PC-9 (cell line): ENCODE measurements at regions of chr7 and their contacts with region 1.

Region 1: GRCh38 chr7:51350200-51350921 is 33.8 kb upstream of the COBL start:
- DNase-seq: peak; percentile 82 to 100
- H3K4me3 ChIP-seq: peak overlapping the region; percentile 7; the same call in 1 of the 2 replicates
- H3K27ac ChIP-seq: peak overlapping the region; percentile 65
- H3K4me1 ChIP-seq: peaks cover 23% of the 10 kb centered on the region
- H3K27me3 ChIP-seq: no peaks in the 10 kb centered on the region
- CTCF ChIP-seq: no peak

Region 2: GRCh38 chr7:51315393-51316261 is 34.7 kb before region 1 on chr7:
- CTCF ChIA-PET with region 1: no interaction called
- POLR2A ChIA-PET with region 1: interaction called, 3 read pairs
- intact Hi-C with region 1: loop called (anchors 1 kb)
- DNase-seq: peak; percentile 92 to 98
- H3K4me3 ChIP-seq: peak overlapping the region; percentile 71
- H3K27ac ChIP-seq: peak overlapping the region; percentile 86
- H3K4me1 ChIP-seq: peaks cover 34% of the 10 kb centered on the region
- H3K27me3 ChIP-seq: no peaks in the 10 kb centered on the region
- CTCF ChIP-seq: no peak

Region 3: DNA sequence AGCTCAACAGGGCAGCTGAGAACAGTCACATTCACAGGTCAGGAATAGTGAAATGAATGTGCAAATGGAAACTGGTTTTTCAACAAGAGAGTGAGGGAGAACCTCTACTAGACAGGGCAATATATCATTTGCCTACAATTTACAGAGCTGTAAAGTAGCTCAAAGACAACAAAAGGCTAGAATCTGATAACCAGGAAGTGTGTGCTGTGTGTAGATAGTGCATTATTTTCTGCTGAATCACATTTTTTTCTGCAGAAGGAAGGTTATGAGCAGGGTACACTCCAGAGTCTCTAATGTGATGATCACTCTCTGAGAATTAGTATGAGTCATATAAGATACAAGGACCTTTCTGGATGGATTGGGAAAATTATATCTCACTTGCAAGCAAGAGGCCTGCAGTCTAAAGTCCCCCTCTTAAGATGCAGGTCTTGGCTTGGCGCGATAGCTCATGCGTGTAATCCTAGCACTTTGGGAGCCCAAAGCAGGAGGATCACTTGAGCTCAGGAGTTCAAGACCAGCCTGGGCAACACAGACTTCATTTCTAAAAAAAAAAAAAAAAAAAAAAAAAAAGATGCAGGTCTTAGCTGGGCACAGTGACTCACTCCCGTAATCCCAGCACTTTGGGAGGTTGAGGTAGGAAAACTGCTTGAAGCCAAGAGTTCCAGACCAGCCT is 26.2 kb after region 1 on chr7:
- CTCF ChIA-PET with region 1: no interaction called
- POLR2A ChIA-PET with region 1: no interaction called
- intact Hi-C with region 1: loop called (anchors 1 kb)
- DNase-seq: peak; percentile 59 to 100
- H3K4me3 ChIP-seq: no peak overlapping the region
- H3K27ac ChIP-seq: peak overlapping the region; percentile 80
- H3K4me1 ChIP-seq: peaks cover 21% of the 10 kb centered on the region
- H3K27me3 ChIP-seq: no peaks in the 10 kb centered on the region
- CTCF ChIP-seq: no peak